Activated CD8-positive, alpha-beta T cell treated with anti-CD3 and anti-CD28 coated beads for 36 hours (primary cell): ENCODE measurements at regions of chr7 and their contacts with region 1.

Region 1: DNA sequence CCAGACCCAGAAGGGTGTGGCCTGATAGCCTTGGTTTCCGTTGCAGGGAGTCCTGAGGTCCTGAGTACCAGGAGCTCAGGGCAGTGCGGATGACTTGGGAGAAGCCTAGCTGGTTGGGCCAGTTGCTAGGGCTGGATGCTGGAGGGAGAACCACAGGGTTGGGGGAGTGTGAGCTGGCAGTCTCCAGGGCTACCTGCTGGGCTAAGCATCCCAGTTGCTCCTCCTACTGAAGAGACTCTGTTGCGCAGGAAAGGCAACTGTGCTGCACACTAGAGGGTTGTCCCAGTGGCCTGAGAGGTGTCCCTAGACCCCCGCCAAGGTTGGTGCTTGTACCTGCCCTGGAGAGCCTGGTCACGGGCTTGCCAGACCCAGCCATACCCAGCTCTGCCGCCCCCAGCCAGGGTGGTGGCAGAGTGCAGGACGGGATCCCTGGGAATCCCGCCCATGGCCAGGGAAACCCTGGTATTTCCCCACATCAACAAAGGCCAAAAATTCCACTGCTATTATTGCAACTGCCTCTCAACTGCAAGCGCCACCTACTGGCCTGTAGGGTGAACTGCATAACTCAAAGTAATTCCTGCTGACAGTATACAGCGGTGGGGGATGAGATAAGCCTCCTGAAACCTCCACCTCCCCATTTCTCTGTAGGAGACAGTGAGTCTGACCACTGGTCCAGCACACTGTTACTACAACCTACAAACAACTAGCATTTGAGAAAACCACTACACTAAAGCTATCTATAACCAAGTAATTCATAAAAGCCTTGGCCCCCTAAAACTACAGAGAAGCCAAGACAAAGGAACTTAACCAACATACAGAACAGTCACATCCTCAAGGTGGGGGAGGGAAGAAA is 67.6 kb upstream of the DDC start:
- DNase-seq: peak; percentile 70
- ATAC-seq: peak; percentile 94
- H3K4me3 Mint-ChIP-seq: no peak overlapping the region
- H3K27ac Mint-ChIP-seq: no peak overlapping the region
- H3K4me1 Mint-ChIP-seq: peaks cover 5% of the 10 kb centered on the region
- H3K27me3 Mint-ChIP-seq: peaks cover 3% of the 10 kb centered on the region
- CTCF ChIP-seq: peak; percentile 91

Region 2: DNA sequence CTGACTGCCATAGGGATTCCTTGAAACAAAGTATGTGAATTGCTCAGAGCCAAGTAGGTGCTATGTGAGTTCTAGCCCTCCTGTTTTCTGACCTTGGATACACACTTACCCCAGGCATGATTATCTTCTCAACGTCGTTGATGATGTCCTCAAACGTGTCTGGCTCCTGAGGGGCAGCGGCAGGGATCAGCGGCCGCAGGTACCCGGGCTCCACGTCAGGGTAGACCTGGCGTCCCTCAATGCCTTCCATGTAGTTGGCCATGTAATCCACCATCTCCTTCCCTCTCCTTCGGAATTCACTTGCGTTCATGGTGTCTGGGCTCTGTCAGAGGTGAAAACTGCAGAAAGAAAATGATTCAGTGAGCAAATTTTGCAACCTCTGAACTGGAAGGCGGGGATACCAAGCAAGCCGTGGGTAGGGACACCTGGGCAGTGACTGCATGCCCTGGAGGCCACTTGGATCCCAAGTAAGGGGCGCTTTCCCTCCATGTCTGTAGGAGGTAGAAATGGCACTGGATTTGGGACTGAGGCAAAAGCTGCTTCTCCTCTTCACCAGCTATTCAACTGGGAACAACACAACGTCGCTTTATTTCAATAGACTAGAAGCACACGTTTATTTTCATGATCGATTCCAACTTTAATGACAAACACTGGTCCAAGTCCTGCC is 88.9 kb before region 1 on chr7:
- CTCF ChIA-PET with region 1: no interaction called
- POLR2A ChIA-PET with region 1: no interaction called
- intact Hi-C with region 1: no loop called
- DNase-seq: no peak
- ATAC-seq: no peak
- H3K4me3 Mint-ChIP-seq: no peak overlapping the region
- H3K27ac Mint-ChIP-seq: no peak overlapping the region
- H3K4me1 Mint-ChIP-seq: no peaks in the 10 kb centered on the region
- H3K27me3 Mint-ChIP-seq: peaks cover 1% of the 10 kb centered on the region
- CTCF ChIP-seq: no peak

Region 3: DNA sequence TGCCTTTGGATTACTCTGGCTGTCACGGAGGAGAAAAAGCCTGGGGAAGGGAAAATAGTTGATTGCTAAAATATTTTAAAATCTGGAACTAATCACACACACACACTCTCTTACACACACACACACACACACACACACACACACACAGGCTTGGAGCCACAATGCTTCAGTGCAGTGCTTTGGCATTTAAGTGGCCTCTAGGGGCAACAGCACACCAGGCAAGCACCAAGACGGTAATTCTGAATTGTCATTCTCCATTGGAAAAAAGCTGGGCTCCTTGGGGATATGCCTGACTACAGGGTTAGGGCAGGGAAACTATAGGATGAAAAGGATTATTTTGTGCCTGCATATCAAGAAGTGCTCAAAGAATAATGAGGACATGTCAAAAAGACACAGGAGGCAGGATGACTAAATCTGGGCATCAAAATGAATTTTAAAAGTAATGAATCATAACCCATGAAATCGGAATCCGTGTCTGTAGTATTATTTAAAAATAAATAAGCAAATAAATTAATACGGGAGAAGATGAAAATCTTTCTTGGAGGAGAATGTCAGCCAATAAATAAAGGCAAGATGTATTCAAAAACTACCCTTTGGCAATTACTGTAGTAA is 37.2 kb before region 1 on chr7:
- CTCF ChIA-PET with region 1: interaction called, 14 read pairs
- POLR2A ChIA-PET with region 1: no interaction called
- intact Hi-C with region 1: no loop called
- DNase-seq: peak; percentile 32
- ATAC-seq: peak; percentile 74
- H3K4me3 Mint-ChIP-seq: no peak overlapping the region
- H3K27ac Mint-ChIP-seq: no peak overlapping the region
- H3K4me1 Mint-ChIP-seq: peaks cover 15% of the 10 kb centered on the region
- H3K27me3 Mint-ChIP-seq: no peaks in the 10 kb centered on the region
- CTCF ChIP-seq: no peak

Region 4: DNA sequence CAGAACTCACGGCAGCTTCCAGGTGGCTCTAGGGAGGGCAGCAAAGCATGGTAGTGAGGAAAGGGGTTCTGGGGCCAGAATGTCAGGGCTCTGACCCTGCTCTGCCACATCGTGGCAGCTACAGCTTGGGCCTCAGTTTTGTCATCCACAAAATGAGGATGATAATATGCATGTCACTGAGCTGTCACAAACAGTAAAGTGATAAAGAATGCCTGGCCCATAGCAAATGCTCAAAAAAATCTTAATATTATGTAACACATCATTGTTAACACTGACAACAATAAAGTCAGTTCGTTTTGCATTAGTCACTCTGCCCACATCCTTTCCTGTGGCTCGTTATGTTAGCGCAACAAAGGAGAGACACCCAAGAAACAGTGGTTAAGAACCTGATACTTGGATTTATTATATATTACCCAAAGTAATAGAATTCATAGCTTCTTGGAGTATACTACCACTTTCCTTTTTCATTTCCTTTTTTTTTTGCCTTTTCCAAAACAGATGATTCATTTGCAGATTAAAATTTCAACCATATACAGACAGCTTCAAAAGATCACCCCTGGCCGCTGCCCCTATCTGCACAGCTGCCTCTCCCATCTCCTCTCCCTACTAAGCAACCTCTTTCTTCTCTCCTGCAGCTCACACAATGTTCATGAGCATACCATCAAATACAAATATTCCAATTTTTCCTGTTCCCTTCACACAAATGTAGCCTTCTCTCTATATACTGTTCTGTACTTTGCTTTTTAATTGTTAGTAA is 22.1 kb before region 1 on chr7:
- CTCF ChIA-PET with region 1: interaction called, 31 read pairs
- POLR2A ChIA-PET with region 1: interaction called, 3 read pairs
- intact Hi-C with region 1: no loop called
- DNase-seq: peak; percentile 80
- ATAC-seq: peak; percentile 83
- H3K4me3 Mint-ChIP-seq: no peak overlapping the region
- H3K27ac Mint-ChIP-seq: no peak overlapping the region
- H3K4me1 Mint-ChIP-seq: peaks cover 32% of the 10 kb centered on the region
- H3K27me3 Mint-ChIP-seq: no peaks in the 10 kb centered on the region
- CTCF ChIP-seq: no peak

Region 5: DNA sequence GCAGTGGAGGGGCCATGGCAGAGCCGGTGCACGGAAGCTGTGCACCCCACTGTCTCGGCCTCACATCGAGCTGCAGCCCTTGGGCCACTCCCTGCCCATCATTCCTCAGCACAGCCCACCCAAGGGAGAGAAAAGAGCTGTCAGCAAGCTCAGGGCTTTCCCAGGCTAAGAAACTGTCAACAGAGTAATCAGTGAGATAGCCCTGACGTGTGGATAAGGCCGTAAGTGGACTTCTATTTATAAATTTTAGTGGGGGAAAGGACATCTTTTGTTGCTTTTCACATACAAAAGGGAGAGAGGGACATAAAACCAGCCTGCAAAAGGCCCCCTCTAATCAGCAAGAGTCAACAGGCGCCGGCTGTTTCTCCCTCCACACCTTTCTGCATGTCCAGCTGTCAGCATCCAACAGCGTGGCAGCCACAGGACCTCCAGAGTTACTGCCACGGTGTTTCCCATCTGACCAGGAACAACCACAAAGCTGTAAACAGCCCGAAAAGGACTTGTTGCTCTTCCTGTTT is 10.8 kb before region 1 on chr7:
- CTCF ChIA-PET with region 1: interaction called, 25 read pairs
- POLR2A ChIA-PET with region 1: interaction called, 3 read pairs
- intact Hi-C with region 1: no loop called
- DNase-seq: no peak
- ATAC-seq: no peak
- H3K4me3 Mint-ChIP-seq: no peak overlapping the region
- H3K27ac Mint-ChIP-seq: no peak overlapping the region
- H3K4me1 Mint-ChIP-seq: no peaks in the 10 kb centered on the region
- H3K27me3 Mint-ChIP-seq: no peaks in the 10 kb centered on the region
- CTCF ChIP-seq: no peak

Region 6: DNA sequence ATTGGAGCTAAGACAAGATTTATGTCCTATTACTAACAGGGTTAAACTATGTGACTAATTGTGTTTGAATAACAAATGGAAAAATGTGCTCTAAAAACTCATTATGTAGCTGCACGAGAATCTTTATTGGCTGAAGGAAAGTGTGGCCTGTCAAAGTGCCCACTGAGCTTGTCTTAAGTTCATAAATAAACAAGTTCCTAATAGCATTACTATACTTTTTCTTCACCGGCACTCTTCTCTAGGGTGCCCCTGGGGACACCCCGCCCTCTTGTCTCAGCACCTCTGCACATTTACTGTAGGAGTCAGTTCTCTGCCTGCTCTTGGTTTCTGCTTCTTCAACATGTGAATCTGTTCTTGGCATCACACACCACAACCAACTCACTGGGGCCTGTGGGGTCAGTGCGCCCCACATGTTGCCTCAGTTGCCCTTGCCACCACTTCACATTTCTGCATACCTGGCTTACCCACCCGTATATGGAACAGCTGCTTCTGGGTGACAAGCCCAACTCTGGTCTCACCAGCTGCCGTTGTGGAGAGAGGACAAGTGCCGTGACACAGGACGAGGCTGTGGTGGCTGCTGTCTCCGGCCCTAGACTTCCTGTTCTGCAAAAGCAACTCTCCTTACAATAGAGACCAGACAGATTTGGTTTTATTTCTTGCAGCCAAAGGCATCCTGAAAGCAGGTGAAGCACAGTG is 28.7 kb after region 1 on chr7:
- CTCF ChIA-PET with region 1: interaction called, 11 read pairs
- POLR2A ChIA-PET with region 1: no interaction called
- intact Hi-C with region 1: no loop called
- DNase-seq: peak; percentile 47
- ATAC-seq: no peak
- H3K4me3 Mint-ChIP-seq: no peak overlapping the region
- H3K27ac Mint-ChIP-seq: peak overlapping the region; percentile 5
- H3K4me1 Mint-ChIP-seq: peaks cover 54% of the 10 kb centered on the region
- H3K27me3 Mint-ChIP-seq: no peaks in the 10 kb centered on the region
- CTCF ChIP-seq: no peak

Region 7: DNA sequence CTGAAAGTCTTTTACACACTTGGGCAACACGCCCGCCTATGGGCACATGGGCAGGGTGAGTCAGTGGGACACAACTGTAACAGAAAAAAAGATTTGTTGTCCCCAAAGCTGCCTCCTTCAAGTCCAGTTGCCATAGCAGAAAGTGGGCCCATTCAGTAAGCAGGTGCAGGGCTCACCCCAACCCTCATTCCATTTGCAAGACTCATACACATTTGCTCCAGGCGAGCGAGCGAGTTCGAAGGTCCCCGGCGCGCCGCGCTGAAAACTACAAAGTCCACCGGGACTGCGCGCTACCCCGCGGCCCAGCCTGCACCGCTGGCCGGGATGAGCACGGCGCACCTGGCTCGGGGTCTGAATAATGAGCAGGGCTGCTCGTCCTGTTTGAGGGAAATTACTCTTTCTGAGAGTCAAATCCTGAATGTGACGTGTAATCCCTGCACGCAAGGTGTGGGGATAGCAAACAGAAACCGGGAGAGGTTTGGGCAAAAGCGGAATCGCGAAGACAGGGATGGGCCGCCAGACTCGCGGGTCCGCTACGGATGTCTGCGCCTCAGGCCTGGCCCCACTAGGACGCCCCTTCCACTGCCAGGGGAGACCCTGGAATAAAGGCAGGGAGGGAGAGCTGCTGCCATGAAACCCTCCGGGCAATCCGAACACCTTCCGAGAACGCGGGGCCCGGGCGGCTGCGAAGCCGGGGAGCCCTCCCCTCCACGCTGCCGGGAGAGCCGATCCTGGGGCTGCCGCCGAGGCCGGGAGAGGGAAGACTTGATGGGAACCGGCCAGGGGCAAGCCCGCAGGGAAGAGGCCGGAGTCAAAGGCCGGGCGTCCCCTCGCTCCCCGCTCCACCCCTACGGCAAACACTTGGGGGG is 682.8 kb after region 1 on chr7:
- CTCF ChIA-PET with region 1: no interaction called
- POLR2A ChIA-PET with region 1: no interaction called
- intact Hi-C with region 1: no loop called
- DNase-seq: no peak
- ATAC-seq: no peak
- H3K4me3 Mint-ChIP-seq: peak overlapping the region; percentile 31
- H3K27ac Mint-ChIP-seq: no peak overlapping the region
- H3K4me1 Mint-ChIP-seq: peaks cover 3% of the 10 kb centered on the region
- H3K27me3 Mint-ChIP-seq: peaks cover 34% of the 10 kb centered on the region
- CTCF ChIP-seq: no peak